Panc1 (cell line): ENCODE measurements at regions of chr14 and their contacts with region 1.

Region 1: DNA sequence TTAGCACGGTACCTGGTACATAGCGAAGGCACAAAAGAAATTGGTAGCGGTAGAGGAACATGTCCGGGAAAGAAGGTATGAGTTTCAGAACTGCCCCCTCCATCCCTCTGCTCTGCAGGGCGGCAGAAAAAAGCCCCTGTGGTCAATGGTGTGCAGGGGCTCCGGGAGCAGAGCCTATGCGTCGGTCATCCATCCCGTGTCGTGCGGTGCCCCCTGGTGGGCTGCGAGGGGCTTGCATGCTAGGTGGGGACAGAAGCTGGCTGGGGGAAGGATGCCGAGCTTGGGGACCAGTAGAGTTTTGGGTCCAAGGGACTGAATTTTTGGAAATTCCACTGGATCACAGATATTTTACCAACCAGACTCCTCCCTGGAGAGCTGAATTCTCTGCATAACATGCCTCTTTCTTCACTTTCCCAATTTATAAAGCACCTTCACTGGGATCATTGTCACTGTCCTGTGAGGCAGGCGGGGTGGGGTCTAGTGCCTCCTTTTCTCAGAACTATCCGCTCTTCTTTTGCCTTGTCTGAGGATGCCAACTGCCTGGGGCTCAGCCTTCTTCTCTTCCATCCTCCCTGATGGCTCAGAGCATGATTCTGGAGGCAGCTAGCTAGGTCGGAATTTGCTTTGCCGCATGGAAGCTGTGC is 148.7 kb downstream of the SMOC1 start:
- DNase-seq: peak; percentile 17
- ATAC-seq: peak; percentile 90
- H3K4me3 ChIP-seq: no peak overlapping the region
- H3K27ac ChIP-seq: no peak overlapping the region
- H3K4me1 ChIP-seq: no peaks in the 10 kb centered on the region
- H3K27me3 ChIP-seq: no peaks in the 10 kb centered on the region; the same call in 1 of the 2 replicates
- CTCF ChIP-seq: peak; percentile 83

Region 2: GRCh38 chr14:69726761-69727511 is 301.0 kb before region 1 on chr14:
- CTCF ChIA-PET with region 1: interaction called, 8 read pairs
- POLR2A ChIA-PET with region 1: no interaction called
- in situ Hi-C with region 1: no loop called
- intact Hi-C with region 1: loop called (anchors 5 kb)
- DNase-seq: peak; percentile 28
- ATAC-seq: peak; percentile 97
- H3K4me3 ChIP-seq: peak overlapping the region; percentile 35 to 46
- H3K27ac ChIP-seq: no peak overlapping the region
- H3K4me1 ChIP-seq: no peaks in the 10 kb centered on the region
- H3K27me3 ChIP-seq: no peaks in the 10 kb centered on the region
- CTCF ChIP-seq: peak; percentile 94

Region 3: DNA sequence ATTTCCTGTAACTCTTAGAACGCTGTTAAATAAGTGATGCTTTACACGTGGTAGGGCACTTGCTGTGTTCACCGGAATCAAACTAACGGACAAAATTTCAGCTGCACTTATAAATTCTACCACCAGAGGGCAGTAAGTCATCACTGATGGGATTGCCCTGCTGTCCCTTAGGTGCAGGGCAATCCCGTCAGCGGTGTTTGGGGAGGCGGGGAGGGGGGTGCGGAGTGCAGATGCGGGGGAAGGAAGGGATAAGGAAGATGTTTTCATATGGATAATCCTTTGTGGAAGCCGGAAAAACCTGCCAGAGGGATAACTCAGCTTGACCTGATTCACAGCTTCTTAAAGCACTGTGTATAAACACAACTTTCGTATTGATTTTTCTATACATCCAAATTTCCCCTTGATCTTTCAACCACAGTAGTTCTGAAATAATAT is 209.1 kb before region 1 on chr14:
- CTCF ChIA-PET with region 1: interaction called, 15 read pairs
- POLR2A ChIA-PET with region 1: no interaction called
- in situ Hi-C with region 1: no loop called
- intact Hi-C with region 1: loop called (anchors 1 kb)
- DNase-seq: peak; percentile 70
- ATAC-seq: peak; percentile 92
- H3K4me3 ChIP-seq: no peak overlapping the region
- H3K27ac ChIP-seq: no peak overlapping the region
- H3K4me1 ChIP-seq: no peaks in the 10 kb centered on the region
- H3K27me3 ChIP-seq: no peaks in the 10 kb centered on the region
- CTCF ChIP-seq: peak; percentile 81

Region 4: GRCh38 chr14:69910871-69911270 is 117.0 kb before region 1 on chr14:
- CTCF ChIA-PET with region 1: no interaction called
- POLR2A ChIA-PET with region 1: no interaction called
- in situ Hi-C with region 1: no loop called
- intact Hi-C with region 1: no loop called
- DNase-seq: no peak
- ATAC-seq: no peak
- H3K4me3 ChIP-seq: no peak overlapping the region
- H3K27ac ChIP-seq: no peak overlapping the region
- H3K4me1 ChIP-seq: no peaks in the 10 kb centered on the region
- H3K27me3 ChIP-seq: peaks cover 3% of the 10 kb centered on the region
- CTCF ChIP-seq: no peak

Region 5: DNA sequence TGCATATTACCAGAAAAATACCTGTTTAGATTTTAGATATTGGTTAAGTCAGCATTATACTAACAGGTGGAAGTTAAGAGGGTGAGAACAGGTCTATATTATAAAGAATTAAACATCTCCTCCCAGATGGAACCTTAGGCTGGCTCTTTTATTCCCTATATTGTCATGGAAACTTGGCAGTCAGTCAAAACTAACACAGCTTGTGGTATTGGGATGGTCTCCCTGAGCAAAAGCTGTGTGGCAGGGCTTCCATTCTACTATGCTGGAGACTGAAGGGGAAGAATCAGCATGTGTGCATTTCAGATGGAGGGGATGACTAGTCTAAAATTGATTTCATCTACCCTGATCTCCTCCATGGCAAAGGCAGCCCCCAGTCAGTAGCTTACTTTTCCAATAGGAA is 82.0 kb before region 1 on chr14:
- CTCF ChIA-PET with region 1: no interaction called
- POLR2A ChIA-PET with region 1: no interaction called
- in situ Hi-C with region 1: no loop called
- intact Hi-C with region 1: no loop called
- DNase-seq: no peak
- ATAC-seq: no peak
- H3K4me3 ChIP-seq: no peak overlapping the region
- H3K27ac ChIP-seq: no peak overlapping the region
- H3K4me1 ChIP-seq: no peaks in the 10 kb centered on the region
- H3K27me3 ChIP-seq: no peaks in the 10 kb centered on the region; the same call in 1 of the 2 replicates
- CTCF ChIP-seq: no peak